Esophagus squamous epithelium (tissue), 5 donors: ENCODE measurements at regions of chr1 and their contacts with region 1.

Region 1: GRCh38 chr1:178308438-178308837 is 188.3 kb downstream of the CLEC20A start:
- DNase-seq: no peak
- H3K4me3 ChIP-seq: no peak overlapping the region
- H3K27ac ChIP-seq: no peak overlapping the region
- H3K4me1 ChIP-seq: peaks cover 0 to 18% (median 0%) of the 10 kb centered on the region in 3 donors
- H3K27me3 ChIP-seq: no peaks in the 10 kb centered on the region
- CTCF ChIP-seq: no peak
- POLR2A ChIP-seq: no peak

Region 2: GRCh38 chr1:178168536-178168935 is 139.9 kb before region 1 on chr1:
- intact Hi-C with region 1: no loop called
- DNase-seq: no peak
- H3K4me3 ChIP-seq: no peak overlapping the region
- H3K27ac ChIP-seq: no peak overlapping the region
- H3K4me1 ChIP-seq: no peaks in the 10 kb centered on the region
- H3K27me3 ChIP-seq: no peaks in the 10 kb centered on the region
- CTCF ChIP-seq: no peak
- POLR2A ChIP-seq: no peak

Region 3: GRCh38 chr1:178438432-178438831 is 130.0 kb after region 1 on chr1:
- intact Hi-C with region 1: no loop called
- DNase-seq: no peak
- H3K4me3 ChIP-seq: no peak overlapping the region
- H3K27ac ChIP-seq: peak overlapping the region in 1 of 4 donors; percentile 33
- H3K4me1 ChIP-seq: peaks cover 4 to 37% (median 11%) of the 10 kb centered on the region in 3 donors
- H3K27me3 ChIP-seq: no peaks in the 10 kb centered on the region
- CTCF ChIP-seq: no peak
- POLR2A ChIP-seq: no peak

Region 4: GRCh38 chr1:178501705-178502329 is 193.4 kb after region 1 on chr1:
- intact Hi-C with region 1: loop called (anchors 10 kb)
- DNase-seq: no peak
- H3K4me3 ChIP-seq: no peak overlapping the region
- H3K27ac ChIP-seq: no peak overlapping the region
- H3K4me1 ChIP-seq: peaks cover 0 to 10% (median 8%) of the 10 kb centered on the region in 3 donors
- H3K27me3 ChIP-seq: no peaks in the 10 kb centered on the region
- CTCF ChIP-seq: peak; percentile 55 to 90 (median 72)
- POLR2A ChIP-seq: no peak